Left cardiac atrium (tissue), 4 donors: ENCODE measurements at regions of chr4 and their contacts with region 1.

Region 1: GRCh38 chr4:87973283-87974169 is 2.0 kb upstream of the SPP1 start:
- DNase-seq: peak; percentile 44
- ATAC-seq: peak in 1 of 2 donors; percentile 75

Region 2: DNA sequence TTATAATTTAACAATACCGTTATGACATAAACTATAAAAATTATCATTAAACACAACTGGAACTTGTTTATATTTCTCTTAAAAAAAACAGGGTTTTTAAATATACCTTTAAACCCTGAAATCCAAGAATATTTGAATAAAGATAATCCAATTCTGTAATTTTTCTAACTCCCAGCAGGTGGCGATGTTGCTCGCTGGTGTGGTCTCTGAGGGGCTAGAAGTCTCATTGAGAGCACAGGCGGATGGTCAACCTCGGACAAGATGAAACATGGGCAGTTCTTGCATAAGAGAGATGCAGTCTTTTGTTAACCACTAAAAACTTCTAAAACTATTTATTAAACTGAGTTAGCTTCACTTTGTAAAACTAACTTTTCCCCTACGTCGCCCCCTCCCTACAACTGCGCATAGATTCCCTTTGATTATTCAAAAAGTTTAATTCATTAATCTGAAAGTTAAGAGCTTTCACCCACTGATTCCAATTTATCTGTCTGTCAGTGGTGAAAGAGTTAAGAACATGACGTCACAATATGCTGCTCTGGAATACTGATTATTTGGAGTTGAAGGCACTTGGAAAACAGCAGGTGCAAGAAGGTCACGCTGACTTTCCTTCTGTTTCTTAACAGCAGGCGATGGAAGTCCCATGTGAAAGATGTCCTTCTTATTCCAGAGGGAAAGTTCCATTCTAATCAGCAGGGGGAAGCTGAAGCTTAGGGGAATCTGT is 293.9 kb before region 1 on chr4:
- intact Hi-C with region 1: loop called in 1 of 2 experiments (anchors 5 kb)
- DNase-seq: peak; percentile 60
- ATAC-seq: peak; percentile 78 to 81

Region 3: GRCh38 chr4:87856816-87857215 is 116.7 kb before region 1 on chr4:
- intact Hi-C with region 1: loop called (anchors 2 to 5 kb)
- DNase-seq: no peak
- ATAC-seq: no peak

Region 4: DNA sequence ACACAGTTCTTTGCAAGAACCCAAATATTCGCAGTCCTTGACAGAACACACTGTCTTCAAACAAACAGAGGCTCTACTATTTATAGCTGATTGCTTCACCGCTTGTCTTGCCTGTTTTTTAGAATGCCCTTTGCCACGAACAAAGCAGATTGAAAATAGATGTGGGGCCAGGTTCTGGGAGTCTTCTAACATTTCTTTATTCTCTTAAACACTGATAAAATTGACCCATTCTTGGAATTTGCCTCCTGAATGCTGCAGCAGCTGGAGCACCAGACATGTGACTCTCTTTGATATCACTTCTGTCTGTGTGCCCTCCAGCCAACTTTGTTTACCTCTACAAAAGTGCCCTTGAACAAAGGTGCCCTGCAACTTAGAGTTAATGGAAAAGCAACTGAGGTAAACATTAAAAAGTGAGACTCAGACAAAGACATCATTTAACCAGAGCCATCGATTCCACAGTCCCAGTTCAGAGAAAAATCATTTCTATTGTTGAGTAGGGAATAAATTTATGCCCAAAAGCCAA is 62.2 kb before region 1 on chr4:
- intact Hi-C with region 1: loop called in 1 of 2 experiments (anchors 10 kb)
- DNase-seq: no peak
- ATAC-seq: peak in 1 of 2 donors; percentile 47

Region 5: GRCh38 chr4:88211473-88212252 is 238.1 kb after region 1 on chr4:
- intact Hi-C with region 1: loop called in 1 of 2 experiments (anchors 5 kb)
- DNase-seq: no peak
- ATAC-seq: peak; percentile 59 to 82